CD14-positive monocyte (primary cell): ENCODE measurements at regions of chr19 and their contacts with region 1.

Region 1: DNA sequence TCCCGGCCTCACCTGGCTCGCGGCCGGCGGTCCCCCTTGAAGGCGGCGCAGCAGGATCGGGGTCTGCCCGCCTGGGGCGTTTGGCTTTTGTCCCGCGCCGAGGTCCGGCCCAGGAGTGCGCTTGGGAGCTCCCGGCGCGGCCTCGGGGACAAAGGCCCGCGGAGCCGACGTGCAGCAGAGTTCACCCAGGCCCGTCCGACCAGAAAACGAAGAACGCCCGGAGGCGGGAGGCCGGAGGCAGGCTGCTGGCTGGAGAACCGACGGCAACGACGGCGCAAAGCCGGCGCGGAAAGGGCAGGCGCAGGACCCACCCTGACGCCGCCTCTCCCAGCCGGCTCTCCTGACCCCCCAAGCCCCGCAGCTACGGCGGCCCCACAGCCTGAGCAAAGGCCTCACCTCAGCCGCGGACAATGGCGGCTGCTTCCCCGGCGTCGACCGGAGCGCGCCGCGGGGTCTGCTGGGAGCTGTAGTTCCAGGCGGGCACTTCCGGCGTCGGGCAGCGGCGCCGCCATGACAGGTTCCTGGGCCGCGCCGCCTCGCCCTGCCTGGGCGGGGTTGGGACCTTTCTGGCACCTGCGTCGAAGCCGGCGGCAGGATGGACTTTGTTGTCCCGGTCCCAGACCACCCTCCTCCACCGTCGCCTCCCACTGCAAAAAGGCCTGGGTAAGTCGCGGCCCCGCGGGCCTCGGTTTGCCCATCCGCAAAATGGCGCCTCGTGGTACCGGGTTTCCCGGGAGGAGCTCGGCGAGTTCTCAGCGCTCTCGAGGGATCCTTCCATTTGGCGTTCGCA is at the start of gene ZNF606:
- DNase-seq: peak; percentile 80 to 81 (median 80)
- H3K4me3 ChIP-seq: peak within 1 kb of the TSS; percentile 42 to 91 (median 89)
- H3K4me3 Mint-ChIP-seq: peak within 1 kb of the TSS; percentile 87 to 88
- H3K27ac ChIP-seq: peak within 1 kb of the TSS; percentile 55 to 89
- H3K27ac Mint-ChIP-seq: peak within 1 kb of the TSS; percentile 70 to 92 (median 87)
- H3K4me1 ChIP-seq: peaks cover 22 to 25% of the 10 kb centered on the region in 2 donors
- H3K4me1 Mint-ChIP-seq: peaks cover 33% of the 10 kb centered on the region
- H3K27me3 ChIP-seq: no peaks in the 10 kb centered on the region
- H3K27me3 Mint-ChIP-seq: peaks cover 0 to 1% (median 1%) of the 10 kb centered on the region in 3 donors
- CTCF ChIP-seq: no peak
- polyA plus RNA-seq, gene ZNF606: 0.87 to 1.7 (median 1.2) TPM

Region 2: DNA sequence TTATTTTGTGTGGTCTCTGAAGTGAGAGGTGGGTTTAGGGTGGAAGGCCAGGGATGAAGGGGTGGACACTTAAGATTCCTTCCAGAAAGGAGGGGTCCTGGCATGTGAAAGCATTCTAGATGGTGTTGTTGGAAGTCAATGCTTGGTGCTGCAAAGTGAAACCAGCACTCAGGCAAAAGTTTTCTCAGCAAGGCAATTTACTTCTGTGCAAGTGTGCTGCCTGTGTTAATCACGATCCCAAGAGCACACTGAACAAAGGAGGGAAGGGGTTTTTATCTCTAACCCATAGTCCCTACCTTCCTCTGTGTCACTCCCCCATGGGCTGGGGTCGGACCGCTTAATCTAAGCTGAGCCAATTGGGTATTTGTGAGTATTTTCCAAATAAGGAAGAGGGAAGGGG is 387.2 kb before region 1 on chr19:
- intact Hi-C with region 1: loop called in 1 of 2 experiments (anchors 5 kb)
- DNase-seq: no peak
- H3K4me3 ChIP-seq: peak overlapping the region in 1 of 3 experiments; percentile 97
- H3K4me3 Mint-ChIP-seq: peak overlapping the region in 1 of 2 donors; percentile 84
- H3K27ac ChIP-seq: no peak overlapping the region
- H3K27ac Mint-ChIP-seq: no peak overlapping the region
- H3K4me1 ChIP-seq: peaks cover 12 to 15% of the 10 kb centered on the region in 2 donors
- H3K4me1 Mint-ChIP-seq: peaks cover 12% of the 10 kb centered on the region
- H3K27me3 ChIP-seq: no peaks in the 10 kb centered on the region
- H3K27me3 Mint-ChIP-seq: peaks cover 0 to 6% (median 2%) of the 10 kb centered on the region in 3 donors
- CTCF ChIP-seq: no peak

Region 3: DNA sequence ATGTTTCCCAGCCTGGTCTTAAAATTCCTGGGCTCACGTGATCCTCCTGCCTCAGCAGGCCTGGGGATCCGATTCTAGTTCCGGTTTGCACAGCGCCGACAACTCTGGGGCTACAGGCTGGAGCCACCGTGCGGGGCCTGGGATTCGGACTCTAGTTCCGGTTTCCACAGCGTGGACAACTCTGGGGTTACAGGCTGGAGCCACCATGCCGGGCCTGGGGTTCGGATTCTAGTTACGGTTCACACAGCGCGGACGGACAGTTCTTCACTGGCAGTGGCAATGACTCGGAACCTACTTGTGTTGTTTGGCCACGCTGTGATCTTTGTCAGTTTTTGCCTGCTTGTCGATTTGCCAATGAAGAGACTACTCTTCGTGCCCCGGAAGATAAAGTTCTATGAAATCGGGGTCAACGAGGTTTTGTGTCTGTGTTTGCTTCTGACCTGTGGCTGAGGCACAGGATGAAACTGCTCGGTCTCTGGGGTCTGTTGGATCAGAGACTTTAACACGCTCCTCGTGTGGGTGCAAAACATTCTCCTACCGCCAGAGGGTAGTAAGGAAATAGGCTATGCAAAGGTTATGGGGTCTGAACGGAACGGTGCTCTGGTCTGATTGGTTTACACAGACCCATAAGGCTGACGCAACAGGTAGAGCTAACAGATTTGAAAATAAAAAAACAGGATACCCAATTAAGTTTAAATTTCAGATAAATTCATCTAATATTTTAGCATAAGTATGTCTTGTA is 19.1 kb after region 1 on chr19:
- intact Hi-C with region 1: no loop called
- DNase-seq: peak in 2 of 3 donors; percentile 24 to 41
- H3K4me3 ChIP-seq: no peak overlapping the region
- H3K4me3 Mint-ChIP-seq: no peak overlapping the region
- H3K27ac ChIP-seq: no peak overlapping the region
- H3K27ac Mint-ChIP-seq: no peak overlapping the region
- H3K4me1 ChIP-seq: no peaks in the 10 kb centered on the region
- H3K4me1 Mint-ChIP-seq: peaks cover 3% of the 10 kb centered on the region
- H3K27me3 ChIP-seq: no peaks in the 10 kb centered on the region
- H3K27me3 Mint-ChIP-seq: peaks cover 0 to 9% (median 8%) of the 10 kb centered on the region in 3 donors
- CTCF ChIP-seq: peak; percentile 59

Region 4: DNA sequence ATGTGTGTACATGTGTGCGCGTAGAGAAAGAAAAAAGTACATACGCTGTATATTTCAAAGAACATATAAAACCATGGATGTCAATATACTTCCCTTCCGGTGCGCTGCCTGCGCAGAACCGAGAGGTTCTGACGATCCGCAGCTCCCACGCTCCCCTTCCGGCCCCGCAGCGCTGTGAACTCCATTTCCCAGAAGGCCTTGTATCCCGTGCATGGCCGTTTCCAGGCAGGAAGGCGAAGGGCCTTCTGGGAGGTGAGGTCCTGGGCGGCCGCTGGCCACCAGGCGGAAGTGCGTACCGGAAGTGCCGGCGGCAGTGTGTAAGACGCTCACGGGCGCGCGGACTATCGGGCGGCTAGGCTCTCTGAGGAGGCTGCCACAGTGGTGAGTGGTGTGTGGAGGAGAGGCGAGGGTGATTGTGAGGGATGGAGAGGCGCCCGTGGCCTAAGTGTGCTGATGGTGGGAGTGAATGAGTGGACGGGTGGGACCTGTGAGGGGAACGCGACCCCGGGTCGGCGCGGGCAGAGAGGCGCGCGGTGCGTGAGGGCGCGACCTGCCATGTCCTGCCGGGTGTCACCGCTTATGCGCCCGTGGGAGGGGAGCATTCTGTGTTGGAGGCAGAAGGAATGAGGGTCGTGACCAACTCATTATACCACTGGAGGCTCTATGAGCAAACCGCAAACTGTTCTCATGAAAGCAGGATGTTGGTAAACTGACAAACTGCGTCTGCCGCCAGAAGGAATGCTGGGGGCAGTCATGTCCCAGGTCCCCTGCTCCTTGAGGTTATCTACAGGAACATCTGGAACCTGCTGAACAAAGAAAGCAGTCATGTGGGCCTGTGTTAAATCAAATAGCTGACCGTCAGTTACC is 302.7 kb after region 1 on chr19 and contains the start of gene ERVK3-1:
- intact Hi-C with region 1: loop called in 1 of 2 experiments (anchors 10 kb)
- DNase-seq: peak; percentile 99
- H3K4me3 ChIP-seq: peak within 1 kb of the TSS; percentile 60 to 90 (median 80)
- H3K4me3 Mint-ChIP-seq: peak within 1 kb of the TSS; percentile 91 to 99
- H3K27ac ChIP-seq: peak within 1 kb of the TSS; percentile 65 to 97
- H3K27ac Mint-ChIP-seq: peak within 1 kb of the TSS; percentile 96 to 99 (median 98)
- H3K4me1 ChIP-seq: peaks cover 12 to 16% of the 10 kb centered on the region in 2 donors
- H3K4me1 Mint-ChIP-seq: peaks cover 16% of the 10 kb centered on the region
- H3K27me3 ChIP-seq: no peaks in the 10 kb centered on the region
- H3K27me3 Mint-ChIP-seq: peaks cover 0 to 2% (median 0%) of the 10 kb centered on the region in 3 donors
- CTCF ChIP-seq: no peak
- polyA plus RNA-seq, gene ERVK3-1: 34.6 to 61.5 (median 38.8) TPM